Activated CD4-positive, alpha-beta memory T cell treated with anti-CD3 and anti-CD28 coated beads for 36 hours (primary cell): ENCODE measurements at regions of chr5 and their contacts with region 1.

Region 1: DNA sequence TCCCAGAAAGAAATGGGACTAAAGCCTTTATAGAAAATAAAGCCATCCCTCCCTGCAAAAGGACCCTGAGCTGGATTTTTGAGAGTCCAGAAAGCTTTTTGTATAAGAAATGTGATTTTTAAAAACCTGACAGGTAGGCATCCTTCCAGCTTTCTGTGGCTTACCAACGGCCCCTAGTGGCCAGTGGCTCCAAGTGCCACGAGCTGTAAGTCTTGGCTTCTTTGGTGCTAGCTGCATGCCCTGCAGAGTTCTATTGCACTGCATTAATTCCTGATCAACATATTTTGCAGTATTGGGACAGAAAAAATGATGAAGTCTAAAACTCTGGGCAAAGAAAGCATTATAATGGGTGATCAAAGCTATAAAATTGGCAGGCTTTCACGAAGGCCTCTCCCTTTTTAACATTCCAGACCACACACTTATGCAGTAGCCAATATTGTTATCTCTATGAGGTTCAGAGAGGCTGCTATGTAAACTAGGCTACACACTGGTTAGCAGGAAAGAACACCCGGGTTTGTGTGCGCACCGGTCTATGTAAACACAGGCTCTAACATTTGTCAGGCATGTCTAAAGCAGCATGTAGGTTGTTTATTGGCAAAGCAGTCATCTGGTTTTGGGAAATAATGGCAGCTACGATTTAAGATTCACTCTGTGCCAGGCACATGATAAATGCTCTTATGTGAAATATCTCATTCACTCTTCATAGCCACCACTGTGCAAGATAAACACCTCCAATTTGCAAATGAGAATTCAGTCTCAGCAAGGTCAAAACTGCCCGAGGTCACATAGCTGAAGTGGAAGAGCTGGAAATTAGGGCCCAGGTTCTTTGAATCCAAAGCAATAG is 55.2 kb downstream of the NMUR2 start:
- DNase-seq: peak; percentile 41
- H3K4me3 Mint-ChIP-seq: no peak overlapping the region
- H3K27ac Mint-ChIP-seq: no peak overlapping the region
- H3K4me1 Mint-ChIP-seq: no peaks in the 10 kb centered on the region
- H3K27me3 Mint-ChIP-seq: no peaks in the 10 kb centered on the region

Region 2: DNA sequence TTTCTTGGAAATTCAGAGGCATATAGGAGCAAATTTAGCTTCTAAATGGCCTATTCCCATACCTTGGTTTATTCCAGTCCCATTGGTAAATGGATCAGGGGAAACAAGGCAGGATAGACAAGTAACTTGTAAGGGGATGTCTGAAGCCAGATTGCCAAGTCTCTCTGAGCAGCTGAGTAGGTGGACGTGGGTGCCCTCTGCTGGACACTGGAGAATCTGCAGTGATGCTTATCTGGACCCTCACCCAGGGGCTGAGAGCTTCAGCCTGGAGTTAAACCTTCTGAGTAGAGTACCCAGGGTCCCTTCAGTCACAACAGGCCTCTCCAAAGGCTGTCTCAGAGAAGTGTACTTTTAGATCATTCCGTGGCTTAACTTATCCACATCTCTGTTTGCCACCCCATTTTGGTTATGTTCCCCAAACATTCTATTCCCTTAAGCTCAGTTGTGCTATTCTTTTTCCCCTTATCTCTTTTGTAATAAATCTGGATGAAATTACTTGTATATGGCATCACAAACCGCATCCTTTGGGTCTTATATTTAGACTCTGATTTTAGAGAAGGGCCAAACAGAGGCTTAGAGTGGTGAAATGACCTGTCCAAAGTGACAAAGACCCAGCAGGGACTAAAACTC is 206.9 kb before region 1 on chr5:
- CTCF ChIA-PET with region 1: interaction called, 17 read pairs
- POLR2A ChIA-PET with region 1: no interaction called
- intact Hi-C with region 1: loop called (anchors 10 kb)
- DNase-seq: peak; percentile 73
- H3K4me3 Mint-ChIP-seq: no peak overlapping the region
- H3K27ac Mint-ChIP-seq: no peak overlapping the region
- H3K4me1 Mint-ChIP-seq: no peaks in the 10 kb centered on the region
- H3K27me3 Mint-ChIP-seq: no peaks in the 10 kb centered on the region

Region 3: DNA sequence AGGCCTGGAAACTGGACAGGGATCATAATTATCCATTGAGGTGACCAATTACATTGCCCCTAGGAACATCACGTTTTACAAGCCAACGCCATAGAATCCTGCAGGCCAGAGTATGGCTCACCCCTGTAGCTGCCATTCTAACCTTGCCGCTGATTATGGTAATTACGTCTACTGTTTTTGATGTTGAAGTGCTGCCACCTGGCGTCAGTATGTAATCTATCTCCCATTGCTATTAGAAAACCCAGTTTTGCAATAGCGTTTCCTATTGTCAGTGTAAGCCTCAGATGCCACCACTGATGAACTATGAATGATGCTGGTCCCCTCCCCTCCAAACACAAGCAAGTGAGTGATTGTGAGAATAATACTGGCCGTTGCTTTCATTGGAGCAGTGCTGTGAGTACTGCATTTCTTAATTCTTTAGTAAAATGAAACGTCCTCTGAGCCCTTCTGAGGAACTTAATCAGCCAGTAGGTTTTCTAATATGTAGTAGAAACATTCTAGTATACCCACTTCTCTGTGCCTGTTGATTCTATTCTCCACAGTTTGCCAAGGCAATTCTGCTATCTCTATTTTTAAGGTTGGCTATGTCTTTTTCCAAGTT is 155.6 kb after region 1 on chr5:
- CTCF ChIA-PET with region 1: interaction called, 11 read pairs
- POLR2A ChIA-PET with region 1: no interaction called
- intact Hi-C with region 1: loop called (anchors 10 kb)
- DNase-seq: peak; percentile 56
- H3K4me3 Mint-ChIP-seq: no peak overlapping the region
- H3K27ac Mint-ChIP-seq: no peak overlapping the region
- H3K4me1 Mint-ChIP-seq: peaks cover 4% of the 10 kb centered on the region
- H3K27me3 Mint-ChIP-seq: peaks cover 12% of the 10 kb centered on the region

Region 4: DNA sequence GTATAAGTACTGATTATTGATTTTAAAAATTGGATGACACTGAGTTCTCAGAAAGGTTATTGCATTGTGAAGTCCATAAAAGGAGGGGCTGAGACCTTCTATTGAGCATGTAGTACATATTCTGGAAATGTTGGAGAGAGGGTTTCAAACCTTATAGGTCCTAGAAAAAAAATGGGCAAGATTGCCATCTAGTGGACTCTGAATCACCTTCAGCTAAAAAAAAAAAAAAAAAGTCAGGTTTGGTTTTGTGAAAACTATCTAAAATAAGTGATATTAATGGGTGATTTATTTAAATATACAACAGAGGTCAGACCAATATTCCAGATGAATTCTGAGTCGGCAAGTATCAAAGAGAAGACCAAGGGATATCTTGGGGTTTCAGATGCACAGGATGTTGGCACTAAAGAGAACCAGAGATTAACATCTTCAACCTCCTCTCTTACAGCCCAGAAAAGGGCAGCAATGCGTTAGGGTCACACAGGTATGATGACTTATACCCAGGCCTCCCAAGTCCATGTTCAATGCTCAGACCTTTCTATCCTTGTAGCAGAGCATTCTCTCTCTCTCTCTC is 165.0 kb after region 1 on chr5:
- CTCF ChIA-PET with region 1: interaction called, 6 read pairs
- POLR2A ChIA-PET with region 1: no interaction called
- intact Hi-C with region 1: loop called (anchors 10 kb)
- DNase-seq: no peak
- H3K4me3 Mint-ChIP-seq: no peak overlapping the region
- H3K27ac Mint-ChIP-seq: no peak overlapping the region
- H3K4me1 Mint-ChIP-seq: no peaks in the 10 kb centered on the region
- H3K27me3 Mint-ChIP-seq: peaks cover 4% of the 10 kb centered on the region